CD8-positive, alpha-beta T cell (primary cell): ENCODE measurements at regions of chr15 and their contacts with region 1.

Region 1: DNA sequence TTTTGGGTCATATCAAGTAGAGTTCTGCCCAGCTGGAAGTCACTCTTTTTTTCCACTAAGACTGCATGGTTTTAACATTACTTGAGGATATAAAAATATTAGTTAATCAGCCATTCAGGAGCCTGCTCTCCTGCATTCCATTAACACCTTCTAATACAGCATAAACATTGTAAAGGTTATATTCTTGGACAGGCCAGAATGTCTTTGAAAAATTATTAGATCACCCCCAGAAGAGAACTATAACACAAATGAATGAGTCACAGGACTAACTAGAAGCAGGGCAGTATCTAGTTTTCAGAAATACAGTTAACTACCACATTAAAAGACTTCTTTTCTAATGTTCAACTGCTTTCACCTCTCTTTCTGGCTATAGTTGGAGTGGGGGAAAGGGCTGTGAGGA is 80.9 kb downstream of the THBS1 start:
- DNase-seq: no peak
- ATAC-seq: no peak
- H3K4me3 ChIP-seq: no peak overlapping the region
- H3K4me3 Mint-ChIP-seq: no peak overlapping the region
- H3K27ac ChIP-seq: no peak overlapping the region
- H3K27ac Mint-ChIP-seq: no peak overlapping the region
- H3K4me1 ChIP-seq: no peaks in the 10 kb centered on the region
- H3K4me1 Mint-ChIP-seq: peaks cover 10% of the 10 kb centered on the region
- H3K27me3 ChIP-seq: no peaks in the 10 kb centered on the region
- H3K27me3 Mint-ChIP-seq: no peaks in the 10 kb centered on the region
- CTCF ChIP-seq: no peak

Region 2: DNA sequence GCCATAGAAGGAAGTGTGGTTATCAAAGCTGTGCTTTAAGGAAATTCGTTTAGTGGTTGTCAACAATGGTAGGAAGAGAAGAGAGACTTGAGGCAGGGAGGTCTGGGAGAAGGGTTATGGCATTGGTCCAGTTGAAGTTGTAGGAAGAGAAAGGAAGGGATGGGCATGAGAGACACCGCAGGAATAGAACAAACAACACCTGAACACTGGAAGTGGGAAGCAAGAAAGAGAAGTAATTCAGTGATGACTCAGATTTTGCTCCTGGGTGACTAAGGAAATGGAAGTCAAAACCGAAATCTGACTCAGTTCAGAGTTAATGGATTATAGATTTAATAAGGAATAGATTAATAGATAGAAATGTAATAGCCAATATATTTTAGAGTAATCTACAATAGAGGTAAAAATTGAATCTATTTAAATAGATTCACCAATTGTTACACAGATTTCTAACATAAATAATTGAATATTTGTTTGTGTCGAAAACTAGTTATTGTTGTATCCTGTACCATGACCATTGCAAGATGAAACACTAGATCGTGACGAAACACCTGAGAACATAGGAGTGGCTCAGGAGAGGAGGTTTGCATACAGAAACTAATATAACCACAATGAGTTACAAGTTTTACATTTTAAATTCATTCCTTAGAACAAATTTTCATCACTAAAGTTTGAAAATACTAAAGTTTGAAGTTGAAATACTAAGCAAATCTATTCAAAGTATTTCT is 44.9 kb before region 1 on chr15:
- CTCF ChIA-PET with region 1: no interaction called
- POLR2A ChIA-PET with region 1: no interaction called
- intact Hi-C with region 1: loop called in 1 of 2 experiments (anchors 5 kb)
- DNase-seq: no peak
- ATAC-seq: no peak
- H3K4me3 ChIP-seq: no peak overlapping the region
- H3K4me3 Mint-ChIP-seq: no peak overlapping the region
- H3K27ac ChIP-seq: no peak overlapping the region
- H3K27ac Mint-ChIP-seq: no peak overlapping the region
- H3K4me1 ChIP-seq: no peaks in the 10 kb centered on the region
- H3K4me1 Mint-ChIP-seq: peaks cover 3% of the 10 kb centered on the region
- H3K27me3 ChIP-seq: no peaks in the 10 kb centered on the region
- H3K27me3 Mint-ChIP-seq: no peaks in the 10 kb centered on the region
- CTCF ChIP-seq: no peak

Region 3: GRCh38 chr15:39851500-39852092 is 189.8 kb after region 1 on chr15:
- CTCF ChIA-PET with region 1: no interaction called
- POLR2A ChIA-PET with region 1: no interaction called
- intact Hi-C with region 1: no loop called
- DNase-seq: no peak
- ATAC-seq: no peak
- H3K4me3 ChIP-seq: no peak overlapping the region
- H3K4me3 Mint-ChIP-seq: no peak overlapping the region
- H3K27ac ChIP-seq: no peak overlapping the region
- H3K27ac Mint-ChIP-seq: no peak overlapping the region
- H3K4me1 ChIP-seq: no peaks in the 10 kb centered on the region
- H3K4me1 Mint-ChIP-seq: no peaks in the 10 kb centered on the region
- H3K27me3 ChIP-seq: no peaks in the 10 kb centered on the region
- H3K27me3 Mint-ChIP-seq: peaks cover 7% of the 10 kb centered on the region
- CTCF ChIP-seq: no peak